Right cardiac atrium (tissue), 5 donors: ENCODE measurements at regions of chr1 and their contacts with region 1.

Region 1: DNA sequence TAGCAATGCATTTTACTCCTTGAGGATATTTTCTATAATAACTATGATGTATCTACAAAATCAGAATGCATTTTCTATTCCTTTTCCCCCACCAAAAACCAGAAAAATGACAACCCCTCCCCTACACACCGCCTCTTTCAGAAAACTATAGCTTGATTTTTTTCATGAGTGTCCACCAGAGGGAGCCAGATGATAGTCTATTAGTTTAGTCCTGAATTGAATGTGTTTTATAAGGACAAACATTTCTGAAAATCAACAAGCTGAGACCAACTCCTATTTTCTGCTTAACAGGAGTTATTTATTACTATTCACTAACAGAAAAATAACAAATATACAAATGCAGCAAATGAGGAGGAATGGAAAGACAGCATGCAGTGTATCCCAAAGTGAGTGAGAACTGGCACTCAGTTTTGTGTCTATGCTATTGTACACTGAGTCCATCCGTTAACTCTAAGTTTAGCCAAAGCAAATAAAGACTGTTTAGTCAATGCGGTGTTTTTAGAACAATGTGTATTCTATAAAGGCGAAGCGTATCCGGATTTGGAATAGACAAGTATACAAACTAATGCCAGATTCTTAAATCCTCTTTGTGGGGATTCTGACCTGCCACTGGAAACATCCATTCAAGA is 182.6 kb downstream of the VAV3 start:
- DNase-seq: no peak
- ATAC-seq: peak; percentile 73 to 86
- H3K4me3 ChIP-seq: no peak overlapping the region
- H3K27ac ChIP-seq: no peak overlapping the region
- H3K4me1 ChIP-seq: peaks cover under 1% of the 10 kb centered on the region
- H3K27me3 ChIP-seq: no peaks in the 10 kb centered on the region

Region 2: DNA sequence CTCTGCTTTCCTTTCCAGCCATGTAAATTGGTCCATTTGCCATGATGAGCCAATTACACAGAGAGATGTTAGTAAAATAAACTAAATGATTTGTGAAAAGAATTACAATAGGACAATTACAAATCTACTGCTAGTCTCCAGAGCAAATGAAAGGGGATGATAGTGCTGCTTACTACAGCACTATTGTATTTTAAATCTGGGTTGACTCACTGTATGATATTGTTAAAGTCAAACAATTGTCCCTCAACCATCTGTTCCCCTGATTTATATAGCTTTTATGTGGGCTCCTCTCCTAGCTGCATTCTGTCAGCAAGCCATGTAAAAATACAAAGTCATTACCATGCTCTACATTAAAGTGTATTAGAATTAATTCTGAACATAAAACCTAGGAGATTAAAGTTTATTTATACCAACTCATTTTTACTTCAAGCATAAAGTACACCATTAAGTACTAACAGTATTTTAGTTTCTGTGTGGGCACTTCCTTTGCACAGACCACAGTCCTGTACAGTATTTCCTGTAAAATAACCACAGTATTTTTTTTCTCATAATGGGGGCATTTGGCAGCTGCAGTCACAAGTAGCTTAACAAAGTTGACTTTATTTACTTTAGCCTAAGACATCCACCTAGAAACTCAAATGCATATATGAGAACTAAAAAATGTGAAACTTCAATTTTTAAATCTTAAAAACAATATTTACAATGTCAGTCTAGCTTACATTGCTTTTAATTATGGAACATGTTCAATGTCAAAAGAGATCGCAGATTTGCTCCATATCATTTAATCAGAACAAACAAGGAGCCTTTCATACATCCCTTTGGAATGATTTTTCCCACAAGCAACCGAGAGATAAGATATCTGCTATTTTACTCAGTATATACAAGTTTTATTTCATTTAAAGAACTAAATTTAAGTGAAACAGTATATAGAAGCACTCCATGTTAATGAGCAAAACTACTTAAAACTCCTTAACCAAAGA is 47.0 kb after region 1 on chr1:
- intact Hi-C with region 1: no loop called
- DNase-seq: no peak
- ATAC-seq: no peak
- H3K4me3 ChIP-seq: no peak overlapping the region
- H3K27ac ChIP-seq: no peak overlapping the region
- H3K4me1 ChIP-seq: peaks cover under 1% of the 10 kb centered on the region
- H3K27me3 ChIP-seq: no peaks in the 10 kb centered on the region

Region 3: GRCh38 chr1:107963601-107964335 is 181.4 kb after region 1 on chr1:
- intact Hi-C with region 1: loop called in 2 of 4 experiments (anchors 10 kb)
- DNase-seq: peak; percentile 20 to 71 (median 61)
- ATAC-seq: peak; percentile 36 to 60
- H3K4me3 ChIP-seq: peak overlapping the region; percentile 93
- H3K27ac ChIP-seq: peak overlapping the region; percentile 29
- H3K4me1 ChIP-seq: no peaks in the 10 kb centered on the region
- H3K27me3 ChIP-seq: no peaks in the 10 kb centered on the region

Region 4: DNA sequence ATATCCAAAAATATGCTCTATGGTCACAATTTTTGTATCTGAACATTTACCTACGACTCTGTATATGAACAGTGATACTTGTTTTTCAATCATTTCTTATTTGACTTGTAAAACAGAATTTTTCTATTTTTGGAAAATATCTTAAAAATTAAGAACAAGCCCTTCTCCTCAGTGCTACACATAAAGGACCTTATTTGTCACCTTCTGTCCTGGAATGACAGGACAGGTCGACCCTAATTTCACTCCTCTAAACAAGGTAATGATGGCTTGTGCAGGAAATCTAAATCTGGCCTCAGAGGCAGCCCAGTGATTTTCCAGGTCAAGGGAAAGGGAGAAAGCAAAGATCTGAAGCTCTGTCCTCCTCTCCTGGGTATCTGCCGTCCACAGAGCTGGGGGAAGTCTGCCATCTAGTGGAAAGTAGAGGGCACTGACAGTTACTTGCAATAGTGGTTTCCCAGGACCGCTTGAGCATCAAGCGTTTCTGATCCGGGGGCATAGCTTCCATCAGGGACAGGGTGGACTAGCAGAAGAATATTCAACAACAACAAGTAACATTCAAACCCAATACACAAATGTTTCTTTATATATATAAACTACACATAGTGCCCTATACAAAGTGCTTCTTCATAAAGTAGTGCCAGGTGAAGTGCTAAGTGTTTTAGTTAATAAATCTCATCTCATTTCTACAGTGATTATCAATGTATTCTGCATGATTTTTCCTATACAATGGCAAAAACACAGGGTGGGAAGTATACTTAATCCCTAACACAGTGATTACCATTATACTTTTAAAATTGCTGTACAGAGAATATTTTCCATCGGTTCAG is 343.2 kb after region 1 on chr1:
- intact Hi-C with region 1: loop called (anchors 2 to 5 kb)
- DNase-seq: peak; percentile 38 to 65 (median 61)
- ATAC-seq: peak; percentile 93 to 95
- H3K4me3 ChIP-seq: no peak overlapping the region
- H3K27ac ChIP-seq: no peak overlapping the region
- H3K4me1 ChIP-seq: no peaks in the 10 kb centered on the region
- H3K27me3 ChIP-seq: no peaks in the 10 kb centered on the region